ENCODE measurements at regions of chr20 and their contacts with region 1.

Region 1: GRCh38 chr20:62136283-62137091 is 6.7 kb downstream of the PSMA7 start:
- DNase-seq: peak; percentile 91

Region 2: GRCh38 chr20:62010551-62011402 is 125.7 kb before region 1 on chr20:
- intact Hi-C with region 1: loop called (anchors 5 kb)
- DNase-seq: no peak

Region 3: DNA sequence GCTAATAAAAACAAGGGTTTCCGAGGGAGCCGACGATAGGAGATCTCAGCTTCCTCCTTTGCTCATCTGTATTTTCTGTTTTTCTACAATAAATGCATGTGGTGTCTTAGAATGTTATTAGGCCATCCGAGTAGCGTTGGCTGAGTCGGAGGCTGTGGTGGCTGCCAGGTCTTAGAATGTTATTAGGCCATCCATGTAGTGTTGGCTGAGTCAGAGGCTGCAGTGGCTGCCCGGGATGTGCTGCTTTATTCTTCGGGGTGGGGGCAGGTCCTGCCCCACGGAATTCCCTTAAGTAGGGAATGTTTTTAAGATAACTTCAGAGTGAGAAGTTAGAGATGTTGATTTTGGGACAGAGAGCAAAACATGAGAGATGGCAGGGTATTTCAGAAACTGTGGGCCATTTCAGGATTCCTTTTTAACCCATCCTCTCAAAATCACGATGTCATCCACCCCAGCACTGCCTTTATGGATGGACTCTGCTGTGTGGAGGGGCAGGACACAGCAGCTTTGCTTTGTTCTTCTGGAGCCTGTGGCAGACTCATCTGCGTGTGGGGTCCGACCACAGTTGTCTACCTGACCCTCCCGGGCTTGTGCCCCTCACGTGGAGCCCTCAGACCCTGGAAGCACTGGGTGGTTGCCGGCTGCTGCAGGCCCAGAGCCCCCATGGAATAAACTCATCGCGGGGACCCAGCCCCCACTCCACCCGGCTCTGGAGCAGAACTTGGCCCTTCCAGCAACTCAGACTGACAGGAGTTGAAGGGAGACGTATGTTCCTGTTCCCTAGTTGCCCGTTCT is 122.2 kb after region 1 on chr20:
- intact Hi-C with region 1: no loop called
- DNase-seq: peak; percentile 91